Calu3 (cell line): ENCODE measurements at regions of chr9 and their contacts with region 1.

Region 1: GRCh38 chr9:133837627-133838597 is 99.8 kb upstream of the SARDH start:
- DNase-seq: no peak
- H3K4me3 Mint-ChIP-seq: no peak overlapping the region
- H3K27ac Mint-ChIP-seq: no peak overlapping the region
- H3K4me1 Mint-ChIP-seq: no peaks in the 10 kb centered on the region
- H3K27me3 Mint-ChIP-seq: no peaks in the 10 kb centered on the region
- CTCF ChIP-seq: no peak

Region 2: DNA sequence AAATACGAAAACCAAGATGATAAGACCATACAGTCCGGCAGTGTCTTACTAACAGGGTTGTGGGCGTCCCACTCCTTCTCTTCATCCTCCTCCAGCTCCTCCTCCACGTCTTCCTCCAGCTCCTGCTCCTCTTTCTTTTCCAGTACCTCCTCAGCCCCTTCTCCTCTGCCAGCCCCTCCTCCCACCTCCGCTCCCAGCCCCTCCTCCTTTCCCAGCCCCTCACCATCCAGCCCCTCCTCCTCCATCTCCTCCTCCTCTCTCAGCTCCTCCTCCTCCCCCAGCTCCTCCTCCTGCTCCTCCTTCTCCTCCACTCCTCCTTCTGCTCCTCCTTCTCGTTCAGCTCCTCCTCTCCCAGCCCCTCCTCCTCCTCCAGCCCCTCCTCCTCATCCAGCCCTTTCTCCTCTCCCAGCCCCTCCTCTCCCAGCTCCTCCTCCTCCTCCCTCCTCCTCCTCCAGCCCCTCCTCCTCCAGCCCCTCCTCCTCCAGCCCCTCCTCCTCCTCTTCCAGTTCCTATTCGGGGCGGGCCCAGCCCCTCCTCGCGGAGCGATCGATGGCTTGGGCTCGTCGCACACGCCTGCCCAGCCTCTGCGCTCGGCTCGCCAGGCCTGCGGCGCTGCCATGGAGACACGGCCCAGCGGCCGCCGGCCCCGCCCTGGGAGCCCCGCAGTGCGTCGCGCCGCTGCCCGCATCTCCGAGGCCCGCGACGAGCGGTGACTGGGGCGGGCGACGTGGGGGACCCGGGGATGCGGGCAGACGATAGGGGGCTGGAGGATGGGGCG is 187.1 kb after region 1 on chr9 and contains the start of gene BRD3OS:
- CTCF ChIA-PET with region 1: interaction called, 10 read pairs
- intact Hi-C with region 1: no loop called
- DNase-seq: peak; percentile 91
- H3K4me3 Mint-ChIP-seq: peak within 1 kb of the TSS; percentile 67
- H3K27ac Mint-ChIP-seq: no peak within 1 kb of the TSS
- H3K4me1 Mint-ChIP-seq: no peaks in the 10 kb centered on the region
- H3K27me3 Mint-ChIP-seq: no peaks in the 10 kb centered on the region
- CTCF ChIP-seq: no peak
- total RNA-seq, gene BRD3OS: 10.5 and 10.7 TPM in 2 replicates